ENCODE measurements at regions of chr21 and their contacts with region 1.

Region 1: GRCh38 chr21:45363921-45364467 is 41.0 kb upstream of the COL18A1 start:
- DNase-seq: peak; percentile 87 to 92 (median 89)
- H3K4me3 ChIP-seq: no peak overlapping the region
- H3K27ac ChIP-seq: peak overlapping the region; percentile 88 to 97
- H3K4me1 ChIP-seq: peaks cover 32% of the 10 kb centered on the region
- H3K27me3 ChIP-seq: no peaks in the 10 kb centered on the region
- CTCF ChIP-seq: no peak
- EP300 ChIP-seq: peak; percentile 84
- POLR2A ChIP-seq: peak; percentile 21

Region 2: GRCh38 chr21:45317398-45318145 is 46.4 kb before region 1 on chr21:
- intact Hi-C with region 1: loop called in 1 of 4 experiments (anchors 2 kb)
- DNase-seq: peak; percentile 9 to 38 (median 25)
- H3K4me3 ChIP-seq: no peak overlapping the region
- H3K27ac ChIP-seq: no peak overlapping the region
- H3K4me1 ChIP-seq: peaks cover 9% of the 10 kb centered on the region
- H3K27me3 ChIP-seq: no peaks in the 10 kb centered on the region
- CTCF ChIP-seq: no peak
- EP300 ChIP-seq: no peak
- POLR2A ChIP-seq: no peak

Region 3: GRCh38 chr21:45420061-45420985 is 56.3 kb after region 1 on chr21:
- intact Hi-C with region 1: loop called in 1 of 4 experiments (anchors 5 kb)
- DNase-seq: peak in 3 of 5 donors; percentile 36 to 42 (median 37)
- H3K4me3 ChIP-seq: no peak overlapping the region
- H3K27ac ChIP-seq: no peak overlapping the region
- H3K4me1 ChIP-seq: peaks cover 8% of the 10 kb centered on the region
- H3K27me3 ChIP-seq: no peaks in the 10 kb centered on the region
- CTCF ChIP-seq: no peak
- EP300 ChIP-seq: no peak
- POLR2A ChIP-seq: no peak

Region 4: DNA sequence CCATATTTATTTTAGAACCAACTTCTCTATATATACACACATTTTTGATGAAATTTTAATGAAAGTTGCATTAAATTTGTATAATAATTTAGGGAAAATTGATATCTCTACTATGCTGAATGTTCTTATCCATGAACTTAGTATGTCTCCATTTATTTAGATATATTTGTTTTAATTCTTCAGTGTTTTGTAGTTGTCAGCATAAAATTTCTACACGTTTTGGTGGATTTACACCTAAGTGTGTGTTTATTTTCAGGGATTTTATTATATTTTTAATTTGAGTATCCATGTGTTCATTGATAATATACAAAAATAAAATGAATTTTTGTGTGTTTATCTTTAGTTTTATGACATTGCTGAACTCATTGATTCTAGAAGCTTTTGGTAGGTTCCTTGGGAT is 316.2 kb after region 1 on chr21:
- intact Hi-C with region 1: no loop called
- DNase-seq: no peak
- H3K4me3 ChIP-seq: no peak overlapping the region
- H3K27ac ChIP-seq: no peak overlapping the region
- H3K4me1 ChIP-seq: no peaks in the 10 kb centered on the region
- H3K27me3 ChIP-seq: no peaks in the 10 kb centered on the region
- CTCF ChIP-seq: no peak
- EP300 ChIP-seq: no peak
- POLR2A ChIP-seq: no peak

Measured in ovary (tissue), 10 donors.